Sciatic nerve (tissue), 2 donors: ENCODE measurements at regions of chr3 and their contacts with region 1.

Region 1: DNA sequence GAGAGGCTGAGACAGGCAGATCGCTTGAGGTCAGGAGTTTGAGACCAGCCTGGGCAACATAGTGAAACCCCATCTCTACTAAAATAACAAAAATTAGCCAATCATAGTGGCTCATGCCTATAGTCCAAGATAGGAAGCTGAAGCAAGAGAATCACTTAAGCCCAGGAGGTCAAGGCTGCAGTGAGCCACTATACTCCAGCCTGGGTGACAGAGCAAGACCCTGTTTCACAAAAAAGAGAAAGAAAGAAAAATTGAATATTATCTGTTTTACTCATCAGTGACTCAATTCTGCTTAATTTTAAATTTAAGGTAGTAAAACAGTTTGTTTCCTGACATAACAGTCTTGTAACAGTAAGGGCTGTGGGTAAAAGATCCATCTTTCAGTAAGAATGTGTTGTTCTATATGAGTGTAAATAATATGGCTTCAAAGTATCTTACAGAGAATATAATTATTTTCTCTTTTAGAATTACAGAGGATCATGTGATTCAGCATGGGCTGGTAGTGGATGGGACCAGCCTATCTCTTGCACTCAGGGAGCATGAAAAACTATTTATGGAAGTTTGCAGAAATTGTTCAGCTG is 85.8 kb downstream of the ATP11B start:
- DNase-seq: no peak
- ATAC-seq: no peak

Region 2: GRCh38 chr3:182837855-182838454 is 41.2 kb before region 1 on chr3:
- intact Hi-C with region 1: loop called (anchors 1 kb)
- DNase-seq: no peak
- ATAC-seq: no peak

Region 3: GRCh38 chr3:184050217-184050847 is 1171.2 kb after region 1 on chr3:
- intact Hi-C with region 1: no loop called
- DNase-seq: no peak
- ATAC-seq: no peak